ENCODE measurements at regions of chr18 and their contacts with region 1.

Region 1: GRCh38 chr18:22933206-22933957 is at the start of gene RBBP8:
- DNase-seq: peak; percentile 92
- ATAC-seq: peak; percentile 85
- H3K4me3 Mint-ChIP-seq: peak within 1 kb of the TSS; percentile 94
- H3K27ac Mint-ChIP-seq: peak within 1 kb of the TSS; percentile 96
- H3K4me1 Mint-ChIP-seq: peaks cover 28% of the 10 kb centered on the region
- H3K27me3 Mint-ChIP-seq: no peaks in the 10 kb centered on the region
- CTCF ChIP-seq: no peak
- total RNA-seq, gene RBBP8: 29.1 and 29.3 TPM in 2 replicates

Region 2: GRCh38 chr18:21740724-21741510 is 1192.5 kb before region 1 on chr18 and contains the start of gene MIB1:
- CTCF ChIA-PET with region 1: no interaction called
- POLR2A ChIA-PET with region 1: no interaction called
- intact Hi-C with region 1: loop called (anchors 10 kb)
- DNase-seq: peak; percentile 99
- ATAC-seq: peak; percentile 71
- H3K4me3 Mint-ChIP-seq: peak within 1 kb of the TSS; percentile 97
- H3K27ac Mint-ChIP-seq: peak within 1 kb of the TSS; percentile 97
- H3K4me1 Mint-ChIP-seq: peaks cover 24% of the 10 kb centered on the region
- H3K27me3 Mint-ChIP-seq: no peaks in the 10 kb centered on the region
- CTCF ChIP-seq: no peak
- total RNA-seq, gene MIB1: 21.6 and 22.6 TPM in 2 replicates

Region 3: GRCh38 chr18:22983175-22983574 is 49.8 kb after region 1 on chr18:
- CTCF ChIA-PET with region 1: interaction called, 63 read pairs
- POLR2A ChIA-PET with region 1: interaction called, 9 read pairs
- intact Hi-C with region 1: loop called (anchors 1 kb)
- DNase-seq: no peak
- ATAC-seq: no peak
- H3K4me3 Mint-ChIP-seq: no peak overlapping the region
- H3K27ac Mint-ChIP-seq: no peak overlapping the region
- H3K4me1 Mint-ChIP-seq: peaks cover 34% of the 10 kb centered on the region
- H3K27me3 Mint-ChIP-seq: no peaks in the 10 kb centered on the region
- CTCF ChIP-seq: no peak

Region 4: DNA sequence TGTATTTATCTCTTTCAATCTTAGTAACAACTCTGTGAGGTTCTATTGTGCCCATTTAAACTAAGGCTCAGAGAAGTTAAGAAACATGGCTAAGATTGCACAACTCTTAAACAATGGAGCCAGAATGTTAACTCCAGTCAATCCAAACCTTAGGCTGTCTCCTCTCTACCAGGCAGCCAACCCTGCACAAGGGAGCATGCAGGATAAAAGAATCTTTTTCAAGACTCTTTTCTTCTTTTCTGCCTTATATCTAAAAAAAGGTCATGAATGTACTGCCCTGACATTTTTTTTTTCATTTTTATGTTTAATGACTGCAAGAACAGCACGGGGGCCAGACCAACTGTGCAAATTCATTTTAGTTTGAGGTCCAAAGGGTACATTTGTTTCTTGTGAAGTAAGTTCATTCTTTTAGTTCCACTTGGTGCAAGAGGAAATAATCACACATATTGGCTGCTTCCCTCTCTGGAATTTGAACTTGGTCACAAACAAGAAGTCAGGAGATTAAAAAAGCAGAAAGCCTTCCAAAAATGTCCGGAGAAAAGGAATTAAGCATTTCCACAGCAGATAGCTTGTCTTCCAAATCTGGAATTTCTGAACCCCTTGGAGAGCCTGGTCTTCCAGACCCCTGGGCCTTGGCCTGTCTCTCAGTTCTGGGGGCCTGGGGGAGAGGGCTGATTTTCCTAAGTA is 423.7 kb after region 1 on chr18:
- CTCF ChIA-PET with region 1: no interaction called
- POLR2A ChIA-PET with region 1: no interaction called
- intact Hi-C with region 1: loop called (anchors 2 kb)
- DNase-seq: no peak
- ATAC-seq: no peak
- H3K4me3 Mint-ChIP-seq: no peak overlapping the region
- H3K27ac Mint-ChIP-seq: no peak overlapping the region
- H3K4me1 Mint-ChIP-seq: peaks cover 33% of the 10 kb centered on the region
- H3K27me3 Mint-ChIP-seq: no peaks in the 10 kb centered on the region
- CTCF ChIP-seq: no peak

Region 5: GRCh38 chr18:23452728-23453679 is 519.6 kb after region 1 on chr18 and contains the start of gene RIOK3:
- CTCF ChIA-PET with region 1: no interaction called
- POLR2A ChIA-PET with region 1: no interaction called
- intact Hi-C with region 1: loop called (anchors 1 kb)
- DNase-seq: peak; percentile 91
- ATAC-seq: peak; percentile 97
- H3K4me3 Mint-ChIP-seq: peak within 1 kb of the TSS; percentile 99
- H3K27ac Mint-ChIP-seq: peak within 1 kb of the TSS; percentile 87
- H3K4me1 Mint-ChIP-seq: peaks cover 67% of the 10 kb centered on the region
- H3K27me3 Mint-ChIP-seq: no peaks in the 10 kb centered on the region
- CTCF ChIP-seq: no peak
- total RNA-seq, gene RIOK3: 90.4 and 92.4 TPM in 2 replicates

Region 6: GRCh38 chr18:23619388-23619881 is 686.1 kb after region 1 on chr18:
- CTCF ChIA-PET with region 1: no interaction called
- POLR2A ChIA-PET with region 1: no interaction called
- intact Hi-C with region 1: no loop called
- DNase-seq: peak; percentile 18
- ATAC-seq: peak; percentile 36
- H3K4me3 Mint-ChIP-seq: peak overlapping the region; percentile 63
- H3K27ac Mint-ChIP-seq: no peak overlapping the region
- H3K4me1 Mint-ChIP-seq: peaks cover 17% of the 10 kb centered on the region
- H3K27me3 Mint-ChIP-seq: peaks cover 34% of the 10 kb centered on the region
- CTCF ChIP-seq: no peak

Region 7: DNA sequence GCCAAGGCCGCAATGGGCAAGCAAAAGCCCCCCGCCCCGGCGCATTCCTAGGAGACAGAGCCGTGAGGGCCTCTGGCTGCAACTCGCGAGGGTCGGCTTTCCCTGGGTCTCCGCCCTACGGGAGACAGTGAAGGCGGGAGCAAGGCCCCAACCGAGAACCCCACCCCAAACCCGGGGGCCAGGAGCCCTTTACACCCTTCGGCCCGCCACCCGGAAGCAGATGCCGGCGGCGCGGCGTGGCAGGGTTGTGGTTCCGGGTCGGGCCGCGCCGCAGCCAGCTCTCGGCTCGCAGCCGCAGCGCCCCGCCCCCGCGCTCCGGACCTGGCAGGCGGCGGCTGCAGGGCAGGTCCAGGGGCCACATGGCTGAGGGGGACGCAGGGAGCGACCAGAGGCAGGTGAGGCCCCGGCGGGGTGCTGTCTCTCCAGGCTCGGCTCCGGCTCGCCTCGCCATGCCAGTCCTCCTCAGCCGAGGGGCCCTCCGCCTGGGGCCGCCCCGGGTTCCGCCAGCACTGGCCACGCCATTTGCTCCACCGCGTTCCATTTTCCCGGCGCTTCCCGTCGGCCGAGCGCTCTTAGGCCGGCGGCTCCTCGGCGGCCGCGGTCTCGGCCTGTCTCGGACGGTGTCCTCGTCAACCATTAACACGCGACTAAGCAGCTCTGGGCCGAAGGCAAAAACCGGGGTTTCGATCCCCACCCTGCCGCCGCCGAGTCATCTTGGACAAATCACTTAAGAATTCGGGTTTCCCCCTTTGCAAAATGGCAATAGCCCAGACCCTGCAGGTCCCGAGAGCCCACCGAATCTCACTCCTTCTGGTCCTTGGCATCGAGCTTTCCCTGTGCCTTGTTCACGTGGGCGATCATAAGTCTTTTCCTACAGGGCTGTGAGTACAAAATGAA is 1493.3 kb after region 1 on chr18 and contains the start of gene IMPACT:
- CTCF ChIA-PET with region 1: no interaction called
- POLR2A ChIA-PET with region 1: no interaction called
- intact Hi-C with region 1: loop called (anchors 2 kb)
- DNase-seq: peak; percentile 80
- ATAC-seq: peak; percentile 91
- H3K4me3 Mint-ChIP-seq: peak within 1 kb of the TSS; percentile 93
- H3K27ac Mint-ChIP-seq: peak within 1 kb of the TSS; percentile 87
- H3K4me1 Mint-ChIP-seq: peaks cover 20% of the 10 kb centered on the region
- H3K27me3 Mint-ChIP-seq: peaks cover 23% of the 10 kb centered on the region
- CTCF ChIP-seq: no peak
- total RNA-seq, gene IMPACT: 11.6 and 17.4 TPM in 2 replicates

Measured in activated B cell treated with CpG ODN at 0.5 μM for 24 hours (primary cell).